Calu3 (cell line): ENCODE measurements at regions of chr15 and their contacts with region 1.

Region 1: DNA sequence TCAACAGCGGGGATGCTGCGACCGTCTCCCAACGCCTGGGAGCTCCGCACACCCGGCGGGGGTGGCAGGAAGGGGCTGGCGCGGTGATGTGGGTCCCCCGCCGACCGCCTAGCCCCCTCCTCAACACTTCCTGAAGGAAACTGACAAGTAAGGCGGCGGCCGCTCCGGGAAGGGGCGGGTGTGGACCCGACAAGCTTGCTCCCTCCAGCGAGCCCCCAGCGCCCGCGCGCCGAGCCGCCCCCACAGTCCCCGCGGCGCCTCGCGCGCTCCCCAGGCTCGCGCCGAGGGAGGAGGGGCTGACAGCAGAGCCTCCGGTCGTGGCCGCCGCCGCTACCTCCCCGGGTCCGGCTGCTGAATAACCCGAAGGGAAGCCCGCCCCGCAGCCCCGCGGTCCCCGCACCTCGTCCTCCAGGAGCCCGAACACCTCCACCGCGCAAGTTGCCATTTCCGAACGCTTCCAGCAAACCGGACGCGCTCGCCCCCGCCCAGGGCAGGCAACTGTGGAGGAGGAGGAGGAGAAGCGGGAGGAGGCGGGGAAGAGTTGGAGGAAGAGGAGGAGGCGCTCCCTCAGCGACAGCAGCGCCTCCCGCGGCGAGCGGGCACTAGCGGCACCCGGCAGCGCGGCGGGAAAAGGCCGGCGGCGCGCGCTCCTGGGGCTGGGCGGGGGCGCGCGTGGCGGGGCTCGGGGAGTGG is at the start of gene NEDD4:
- DNase-seq: peak; percentile 93
- H3K4me3 Mint-ChIP-seq: peak within 1 kb of the TSS; percentile 89
- H3K27ac Mint-ChIP-seq: peak within 1 kb of the TSS; percentile 86
- H3K4me1 Mint-ChIP-seq: peaks cover 42% of the 10 kb centered on the region
- H3K27me3 Mint-ChIP-seq: no peaks in the 10 kb centered on the region
- CTCF ChIP-seq: peak; percentile 59
- total RNA-seq, gene NEDD4: 48.0 and 56.8 TPM in 2 replicates

Region 2: DNA sequence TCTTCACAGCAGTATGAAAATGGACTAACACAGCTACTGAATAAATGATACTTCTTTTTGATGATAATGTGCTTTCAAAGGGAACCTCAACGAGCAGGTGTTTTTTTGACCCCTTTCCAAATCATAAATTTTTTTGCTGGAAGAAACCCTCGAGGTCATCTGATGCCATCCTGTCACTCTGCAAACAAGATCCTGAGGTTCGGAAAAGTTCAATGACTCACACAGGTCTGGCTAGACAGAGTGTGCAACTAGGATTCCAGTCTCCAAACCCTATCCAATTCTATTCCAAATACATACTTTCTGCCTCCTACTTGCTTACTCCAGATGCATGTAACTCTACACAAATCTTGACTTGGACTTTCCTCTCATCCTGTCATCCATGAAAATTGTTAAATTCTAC is 124.5 kb before region 1 on chr15:
- CTCF ChIA-PET with region 1: no interaction called
- intact Hi-C with region 1: no loop called
- DNase-seq: no peak
- H3K4me3 Mint-ChIP-seq: no peak overlapping the region
- H3K27ac Mint-ChIP-seq: no peak overlapping the region
- H3K4me1 Mint-ChIP-seq: peaks cover 20% of the 10 kb centered on the region
- H3K27me3 Mint-ChIP-seq: no peaks in the 10 kb centered on the region
- CTCF ChIP-seq: no peak

Region 3: GRCh38 chr15:56040081-56041035 is 47.1 kb after region 1 on chr15:
- CTCF ChIA-PET with region 1: interaction called, 3 read pairs
- intact Hi-C with region 1: loop called (anchors 1 kb)
- DNase-seq: peak; percentile 89
- H3K4me3 Mint-ChIP-seq: peak overlapping the region; percentile 50
- H3K27ac Mint-ChIP-seq: peak overlapping the region; percentile 96
- H3K4me1 Mint-ChIP-seq: peaks cover 79% of the 10 kb centered on the region
- H3K27me3 Mint-ChIP-seq: no peaks in the 10 kb centered on the region
- CTCF ChIP-seq: no peak

Region 4: GRCh38 chr15:56052395-56053045 is 59.3 kb after region 1 on chr15:
- CTCF ChIA-PET with region 1: interaction called, 3 read pairs
- intact Hi-C with region 1: loop called (anchors 2 kb)
- DNase-seq: no peak
- H3K4me3 Mint-ChIP-seq: no peak overlapping the region
- H3K27ac Mint-ChIP-seq: peak overlapping the region; percentile 70
- H3K4me1 Mint-ChIP-seq: peaks cover 35% of the 10 kb centered on the region
- H3K27me3 Mint-ChIP-seq: no peaks in the 10 kb centered on the region
- CTCF ChIP-seq: peak; percentile 57